ENCODE measurements at regions of chr4 and their contacts with region 1.

Region 1: GRCh38 chr4:15001869-15002658 is at the start of gene CPEB2:
- DNase-seq: peak; percentile 97
- H3K4me3 Mint-ChIP-seq: peak within 1 kb of the TSS; percentile 85
- H3K27ac Mint-ChIP-seq: peak within 1 kb of the TSS; percentile 91
- H3K4me1 Mint-ChIP-seq: peaks cover 21% of the 10 kb centered on the region
- H3K27me3 Mint-ChIP-seq: no peaks in the 10 kb centered on the region
- total RNA-seq, gene CPEB2: 12.4 and 15.0 TPM in 2 replicates

Region 2: DNA sequence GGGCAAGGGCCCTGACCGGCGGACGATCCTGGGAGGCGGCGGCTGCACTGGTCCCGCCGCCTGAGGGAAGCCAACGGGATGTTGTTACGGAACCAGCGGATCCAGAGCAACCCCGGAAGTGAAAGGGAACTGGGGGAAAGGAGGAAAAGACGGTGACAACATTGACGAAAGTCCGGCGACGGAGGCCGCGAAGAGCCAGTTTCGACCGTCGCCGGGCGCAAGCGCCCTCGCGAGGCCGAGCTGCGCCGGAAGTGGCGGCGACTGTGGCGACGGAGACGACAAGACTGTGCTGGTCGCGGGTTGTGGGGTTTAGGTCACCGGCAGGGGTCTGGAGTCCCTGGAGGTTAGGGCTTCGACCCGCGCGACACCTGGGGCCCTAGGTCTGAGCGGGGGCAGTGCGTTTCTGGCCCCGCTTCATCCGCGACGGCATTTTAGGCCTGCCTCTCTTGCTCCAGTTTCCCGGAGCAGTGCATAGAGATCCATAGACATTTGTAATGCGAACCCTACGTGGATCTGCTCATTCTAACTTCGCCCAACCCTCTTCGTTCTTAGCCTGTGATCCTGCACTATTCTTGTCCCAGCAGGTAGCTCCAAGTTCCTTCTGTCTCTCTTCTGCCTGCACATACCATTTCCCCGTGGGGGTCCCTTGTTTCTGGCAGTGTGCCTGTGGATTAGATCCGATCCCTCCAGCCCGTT is 1374.3 kb before region 1 on chr4 and contains the start of gene BOD1L1:
- intact Hi-C with region 1: loop called (anchors 1 kb)
- DNase-seq: peak; percentile 95
- H3K4me3 Mint-ChIP-seq: peak within 1 kb of the TSS; percentile 97
- H3K27ac Mint-ChIP-seq: peak within 1 kb of the TSS; percentile 99
- H3K4me1 Mint-ChIP-seq: peaks cover 13% of the 10 kb centered on the region
- H3K27me3 Mint-ChIP-seq: no peaks in the 10 kb centered on the region
- total RNA-seq, gene BOD1L1: 38.3 and 41.0 TPM in 2 replicates

Region 3: GRCh38 chr4:14856076-14856933 is 145.8 kb before region 1 on chr4:
- intact Hi-C with region 1: loop called (anchors 1 kb)
- DNase-seq: peak; percentile 83
- H3K4me3 Mint-ChIP-seq: peak overlapping the region; percentile 48
- H3K27ac Mint-ChIP-seq: peak overlapping the region; percentile 90
- H3K4me1 Mint-ChIP-seq: peaks cover 19% of the 10 kb centered on the region
- H3K27me3 Mint-ChIP-seq: no peaks in the 10 kb centered on the region

Region 4: GRCh38 chr4:14987054-14987453 is 15.0 kb before region 1 on chr4:
- intact Hi-C with region 1: no loop called
- DNase-seq: no peak
- H3K4me3 Mint-ChIP-seq: no peak overlapping the region
- H3K27ac Mint-ChIP-seq: no peak overlapping the region
- H3K4me1 Mint-ChIP-seq: no peaks in the 10 kb centered on the region
- H3K27me3 Mint-ChIP-seq: peaks cover 12% of the 10 kb centered on the region

Region 5: DNA sequence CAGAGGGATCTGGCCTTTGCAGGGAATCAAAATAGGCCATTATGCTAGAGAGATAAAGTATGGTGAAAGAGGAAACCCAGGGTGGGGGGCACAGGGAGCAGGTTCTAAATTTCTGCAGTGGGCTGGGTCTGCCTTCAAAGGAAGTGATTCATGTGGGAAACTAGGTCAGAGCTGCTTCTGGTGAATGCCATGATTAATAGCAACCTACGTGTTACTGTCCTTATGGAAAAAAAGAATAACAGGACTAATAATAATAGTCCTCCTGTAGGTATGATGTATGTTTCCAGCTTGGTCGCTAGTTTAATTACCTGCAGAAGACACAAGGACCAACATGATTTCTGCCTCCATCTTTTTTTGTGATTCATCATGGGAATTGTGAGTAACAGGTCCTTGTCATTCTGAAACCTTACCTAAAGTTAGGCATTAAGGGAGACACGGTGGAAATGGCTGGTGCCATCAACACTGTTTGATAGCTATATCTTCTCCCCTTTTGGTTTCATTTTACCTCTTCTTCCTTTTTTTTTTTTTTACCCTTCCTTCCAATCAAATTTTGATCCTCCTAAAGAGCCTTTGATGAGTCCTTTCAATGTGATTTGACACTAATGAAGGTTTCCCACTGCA is 180.6 kb after region 1 on chr4:
- intact Hi-C with region 1: loop called (anchors 5 kb)
- DNase-seq: no peak
- H3K4me3 Mint-ChIP-seq: no peak overlapping the region
- H3K27ac Mint-ChIP-seq: peak overlapping the region; percentile 64
- H3K4me1 Mint-ChIP-seq: peaks cover 9% of the 10 kb centered on the region
- H3K27me3 Mint-ChIP-seq: no peaks in the 10 kb centered on the region

Region 6: GRCh38 chr4:15327311-15328298 is 325.5 kb after region 1 on chr4:
- intact Hi-C with region 1: no loop called
- DNase-seq: no peak
- H3K4me3 Mint-ChIP-seq: no peak overlapping the region
- H3K27ac Mint-ChIP-seq: no peak overlapping the region
- H3K4me1 Mint-ChIP-seq: no peaks in the 10 kb centered on the region
- H3K27me3 Mint-ChIP-seq: peaks cover 3% of the 10 kb centered on the region

Region 7: GRCh38 chr4:15681207-15682015 is 679.3 kb after region 1 on chr4 and contains the start of gene FAM200B:
- intact Hi-C with region 1: loop called (anchors 2 kb)
- DNase-seq: peak; percentile 100
- H3K4me3 Mint-ChIP-seq: peak within 1 kb of the TSS; percentile 100
- H3K27ac Mint-ChIP-seq: peak within 1 kb of the TSS; percentile 99
- H3K4me1 Mint-ChIP-seq: peaks cover 40% of the 10 kb centered on the region
- H3K27me3 Mint-ChIP-seq: no peaks in the 10 kb centered on the region
- total RNA-seq, gene FAM200B: 6.0 and 9.9 TPM in 2 replicates